BJ (cell line): ENCODE measurements at regions of chr2 and their contacts with region 1.

Region 1: DNA sequence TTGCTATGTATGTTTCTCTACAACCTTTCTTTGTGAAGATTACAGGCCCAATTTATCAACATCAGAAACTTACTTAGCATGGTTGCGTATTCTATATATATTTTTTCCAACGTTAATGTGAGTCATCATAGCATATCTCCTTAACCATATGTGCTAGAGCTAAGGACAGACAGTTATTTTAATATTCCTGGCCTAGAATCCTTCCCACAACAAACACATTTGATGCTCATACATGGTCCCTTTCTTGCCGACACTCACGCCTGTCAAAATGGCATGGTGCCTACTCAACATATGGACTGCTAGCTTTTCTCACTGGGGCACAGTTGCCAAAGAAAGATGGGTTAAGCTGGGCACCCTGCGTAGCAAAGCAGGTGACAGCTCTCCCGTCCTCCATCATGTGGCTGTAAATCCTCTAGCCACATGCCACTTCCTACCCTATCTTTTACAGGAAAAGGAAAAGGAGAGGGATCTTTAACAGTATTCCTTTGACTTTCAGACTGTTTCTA is 75.2 kb upstream of the GALNT5 start:
- DNase-seq: no peak
- H3K4me3 ChIP-seq: no peak overlapping the region
- H3K27me3 ChIP-seq: no peaks in the 10 kb centered on the region
- CTCF ChIP-seq: no peak

Region 2: GRCh38 chr2:157194097-157194688 is 11.9 kb after region 1 on chr2:
- CTCF ChIA-PET with region 1: interaction called, 10 read pairs
- POLR2A ChIA-PET with region 1: no interaction called
- DNase-seq: no peak
- H3K4me3 ChIP-seq: no peak overlapping the region
- H3K27me3 ChIP-seq: no peaks in the 10 kb centered on the region
- CTCF ChIP-seq: peak; percentile 68